Vagina (tissue), 2 donors: ENCODE measurements at regions of chr22 and their contacts with region 1.

Region 1: DNA sequence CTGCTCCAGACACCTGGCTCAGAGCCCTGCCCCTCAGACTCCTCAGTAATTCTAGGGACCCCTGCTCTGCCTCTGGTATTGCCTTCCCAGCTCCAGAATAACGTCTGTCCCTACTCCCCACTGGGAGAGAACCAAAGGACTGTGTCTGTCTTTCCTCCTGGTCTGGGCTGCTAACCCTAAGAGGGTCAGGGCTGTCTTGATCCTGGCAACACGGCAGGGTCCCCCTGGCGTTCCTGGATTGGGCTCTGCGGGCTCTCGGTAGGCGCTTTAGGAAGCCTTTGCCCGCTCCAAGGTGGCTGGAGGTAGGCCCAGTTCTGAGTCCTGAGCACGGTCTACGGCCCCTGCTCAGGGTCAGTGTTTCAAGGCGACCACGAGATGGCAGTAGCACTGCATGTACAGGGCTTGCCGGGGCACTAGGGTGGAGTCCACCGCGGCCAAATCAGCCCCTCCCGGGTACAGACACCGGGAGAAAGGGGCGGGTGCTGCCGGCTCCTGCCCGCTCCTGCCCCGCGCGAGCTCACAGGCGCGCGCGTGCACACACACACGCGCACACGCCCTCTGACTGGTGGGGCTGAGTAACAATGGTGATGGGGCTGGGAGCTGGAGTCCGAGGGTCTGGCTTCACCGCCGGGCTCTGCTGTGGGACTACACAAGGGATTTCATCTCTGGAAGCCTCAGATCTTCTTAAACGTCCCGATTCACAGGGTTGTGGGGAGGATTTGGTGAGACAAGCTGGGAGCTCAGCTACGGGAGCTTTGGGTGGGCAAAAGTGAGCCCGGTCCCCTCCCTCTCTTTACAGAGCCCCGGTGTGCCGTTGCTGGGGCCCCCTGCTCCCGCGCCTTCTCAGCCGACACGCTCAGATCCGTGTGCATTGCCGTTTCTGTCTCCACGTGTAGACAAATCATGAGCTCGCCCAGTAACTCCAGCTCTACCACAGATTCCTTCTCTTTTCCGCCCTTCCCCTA is 30.1 kb upstream of the HMOX1 start:
- DNase-seq: peak in 1 of 2 donors; percentile 97
- H3K4me3 ChIP-seq: peak overlapping the region; percentile 48 to 57
- H3K27ac ChIP-seq: peak overlapping the region; percentile 86
- H3K4me1 ChIP-seq: peaks cover 37% of the 10 kb centered on the region
- H3K27me3 ChIP-seq: no peaks in the 10 kb centered on the region
- CTCF ChIP-seq: peak; percentile 84 to 94 (median 85)
- POLR2A ChIP-seq: peak in 1 of 2 donors; percentile 34

Region 2: GRCh38 chr22:35299673-35300497 is 50.9 kb before region 1 on chr22 and contains the start of gene TOM1:
- intact Hi-C with region 1: no loop called
- DNase-seq: peak in 1 of 2 donors; percentile 99
- H3K4me3 ChIP-seq: peak within 1 kb of the TSS; percentile 84 to 95
- H3K27ac ChIP-seq: peak within 1 kb of the TSS; percentile 99
- H3K4me1 ChIP-seq: peaks cover 31% of the 10 kb centered on the region
- H3K27me3 ChIP-seq: no peaks in the 10 kb centered on the region
- CTCF ChIP-seq: no peak
- POLR2A ChIP-seq: peak; percentile 7 to 83
- total RNA-seq, gene TOM1: 120 TPM

Region 3: GRCh38 chr22:35324762-35325161 is 26.1 kb before region 1 on chr22:
- intact Hi-C with region 1: loop called (anchors 1 kb)
- DNase-seq: no peak
- H3K4me3 ChIP-seq: no peak overlapping the region
- H3K27ac ChIP-seq: no peak overlapping the region
- H3K4me1 ChIP-seq: peaks cover 6% of the 10 kb centered on the region
- H3K27me3 ChIP-seq: no peaks in the 10 kb centered on the region
- CTCF ChIP-seq: no peak
- POLR2A ChIP-seq: no peak